SK-N-SH (cell line): ENCODE measurements at regions of chr1 and their contacts with region 1.

Region 1: GRCh38 chr1:67149179-67149770 is 14.5 kb upstream of the C1orf141 start:
- DNase-seq: peak; percentile 70
- H3K4me3 ChIP-seq: peak overlapping the region in 1 of 2 experiments; percentile 20; a peak in 1 of 4 replicates
- H3K27ac ChIP-seq: no peak overlapping the region
- H3K4me1 ChIP-seq: no peaks in the 10 kb centered on the region
- H3K27me3 ChIP-seq: no peaks in the 10 kb centered on the region
- CTCF ChIP-seq: peak; percentile 72
- EP300 ChIP-seq: no peak
- RAD21 ChIP-seq: peak; percentile 87

Region 2: DNA sequence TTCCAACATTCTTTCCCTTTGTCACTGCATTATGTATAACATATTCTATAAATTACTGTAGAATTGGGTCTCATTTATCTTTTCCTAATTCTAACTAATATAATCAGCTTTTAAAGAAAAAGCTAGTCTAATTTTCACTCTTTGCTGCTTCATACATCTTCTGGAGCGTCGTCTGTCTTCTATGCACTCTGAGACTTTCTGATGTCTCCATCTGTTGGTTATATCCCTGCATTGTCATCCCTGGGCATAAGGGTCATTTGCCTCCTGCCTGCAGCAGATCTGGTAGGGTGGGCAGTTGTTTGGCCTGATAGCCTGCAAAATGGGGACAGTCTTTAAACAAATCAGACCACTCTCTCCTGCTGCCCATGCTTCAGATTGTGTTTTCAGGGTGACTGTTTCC is 437.9 kb before region 1 on chr1:
- CTCF ChIA-PET with region 1: no interaction called
- POLR2A ChIA-PET with region 1: no interaction called
- DNase-seq: peak; percentile 25
- H3K4me3 ChIP-seq: no peak overlapping the region
- H3K27ac ChIP-seq: peak overlapping the region in 1 of 2 experiments; percentile 22; a peak in 1 of 4 replicates
- H3K4me1 ChIP-seq: peaks cover 0 to 5% of the 10 kb centered on the region in 2 experiments; a peak in 2 of 4 replicates
- H3K27me3 ChIP-seq: no peaks in the 10 kb centered on the region
- CTCF ChIP-seq: peak; percentile 54
- EP300 ChIP-seq: no peak
- RAD21 ChIP-seq: peak; percentile 65

Region 3: DNA sequence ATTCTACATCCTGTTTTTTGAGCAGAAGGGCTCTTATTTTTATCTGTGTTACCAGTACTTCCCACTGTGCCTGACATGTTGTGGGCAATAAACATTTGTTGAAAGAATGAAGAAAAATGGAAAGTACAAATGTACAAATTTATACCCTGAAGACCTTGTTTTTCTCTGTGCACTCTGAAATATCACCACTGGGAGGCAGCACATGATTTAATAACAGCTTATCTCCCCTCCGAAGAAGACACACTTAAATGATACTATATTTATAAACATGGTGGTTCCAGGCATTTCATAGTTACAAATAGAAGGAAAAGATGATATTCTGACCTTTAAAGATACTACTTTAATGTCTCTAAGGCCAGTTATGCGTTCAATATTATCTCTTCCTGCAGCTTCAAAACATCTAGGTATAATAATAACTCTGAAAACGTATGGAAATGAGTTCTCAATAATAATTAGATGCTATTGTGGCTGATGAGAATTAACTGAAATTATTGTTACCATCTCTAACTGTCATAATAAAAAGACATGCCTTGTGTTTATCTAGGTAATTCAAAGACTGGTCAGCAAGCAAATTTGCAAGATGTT is 384.2 kb before region 1 on chr1:
- CTCF ChIA-PET with region 1: interaction called, 52 read pairs
- POLR2A ChIA-PET with region 1: no interaction called
- DNase-seq: peak; percentile 42
- H3K4me3 ChIP-seq: no peak overlapping the region
- H3K27ac ChIP-seq: no peak overlapping the region
- H3K4me1 ChIP-seq: no peaks in the 10 kb centered on the region; a peak in 1 of 4 replicates
- H3K27me3 ChIP-seq: no peaks in the 10 kb centered on the region
- CTCF ChIP-seq: peak; percentile 90
- EP300 ChIP-seq: no peak
- RAD21 ChIP-seq: peak; percentile 91

Region 4: GRCh38 chr1:67134695-67135094 is 14.6 kb before region 1 on chr1 and contains the start of gene C1orf141:
- CTCF ChIA-PET with region 1: interaction called, 13 read pairs
- POLR2A ChIA-PET with region 1: no interaction called
- DNase-seq: no peak
- H3K4me3 ChIP-seq: no peak within 1 kb of the TSS
- H3K27ac ChIP-seq: no peak within 1 kb of the TSS
- H3K4me1 ChIP-seq: no peaks in the 10 kb centered on the region
- H3K27me3 ChIP-seq: no peaks in the 10 kb centered on the region
- CTCF ChIP-seq: no peak
- EP300 ChIP-seq: no peak
- RAD21 ChIP-seq: no peak
- polyA plus RNA-seq, gene C1orf141: not detected in 2 replicates

Region 5: DNA sequence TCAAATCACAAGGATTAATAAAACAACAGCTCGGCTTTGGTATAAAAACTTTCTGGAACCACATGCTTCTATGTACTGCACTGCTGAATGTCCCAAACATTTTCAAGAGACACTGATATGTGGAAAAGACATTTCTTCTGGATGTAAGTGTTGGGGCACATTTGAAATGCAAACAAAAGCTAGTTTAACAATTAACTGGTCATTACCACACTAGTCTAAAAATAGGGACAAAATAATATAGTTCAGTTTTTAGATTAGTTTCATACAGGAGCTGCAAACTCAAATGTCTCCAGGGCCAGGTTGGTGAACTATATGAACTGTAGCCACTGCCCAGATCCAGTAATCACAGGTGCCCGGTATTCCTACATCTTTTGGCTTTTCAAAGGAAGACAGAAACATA is 20.2 kb after region 1 on chr1:
- CTCF ChIA-PET with region 1: interaction called, 15 read pairs
- POLR2A ChIA-PET with region 1: no interaction called
- DNase-seq: no peak
- H3K4me3 ChIP-seq: no peak overlapping the region
- H3K27ac ChIP-seq: no peak overlapping the region
- H3K4me1 ChIP-seq: no peaks in the 10 kb centered on the region; a peak in 1 of 4 replicates
- H3K27me3 ChIP-seq: no peaks in the 10 kb centered on the region
- CTCF ChIP-seq: no peak
- EP300 ChIP-seq: no peak
- RAD21 ChIP-seq: no peak

Region 6: GRCh38 chr1:67460676-67461500 is 311.6 kb after region 1 on chr1:
- CTCF ChIA-PET with region 1: no interaction called
- POLR2A ChIA-PET with region 1: no interaction called
- DNase-seq: no peak
- H3K4me3 ChIP-seq: no peak overlapping the region
- H3K27ac ChIP-seq: no peak overlapping the region
- H3K4me1 ChIP-seq: peaks cover 0 to 3% of the 10 kb centered on the region in 2 experiments; a peak in 1 of 4 replicates
- H3K27me3 ChIP-seq: no peaks in the 10 kb centered on the region
- CTCF ChIP-seq: no peak
- EP300 ChIP-seq: no peak
- RAD21 ChIP-seq: no peak